Activated T-helper 2 cell treated with anti-CD3 and anti-CD28 coated beads, Interferon-gamma antibody, Interleukin-2, Interleukin-4, amounts not matched to agents 10 μg/mL and 5 μg/mL and 100 μg/mL, durations not matched to agents 14 hours and 24 hours and 36 hours (primary cell): ENCODE measurements at regions of chr16 and their contacts with region 1.

Region 1: DNA sequence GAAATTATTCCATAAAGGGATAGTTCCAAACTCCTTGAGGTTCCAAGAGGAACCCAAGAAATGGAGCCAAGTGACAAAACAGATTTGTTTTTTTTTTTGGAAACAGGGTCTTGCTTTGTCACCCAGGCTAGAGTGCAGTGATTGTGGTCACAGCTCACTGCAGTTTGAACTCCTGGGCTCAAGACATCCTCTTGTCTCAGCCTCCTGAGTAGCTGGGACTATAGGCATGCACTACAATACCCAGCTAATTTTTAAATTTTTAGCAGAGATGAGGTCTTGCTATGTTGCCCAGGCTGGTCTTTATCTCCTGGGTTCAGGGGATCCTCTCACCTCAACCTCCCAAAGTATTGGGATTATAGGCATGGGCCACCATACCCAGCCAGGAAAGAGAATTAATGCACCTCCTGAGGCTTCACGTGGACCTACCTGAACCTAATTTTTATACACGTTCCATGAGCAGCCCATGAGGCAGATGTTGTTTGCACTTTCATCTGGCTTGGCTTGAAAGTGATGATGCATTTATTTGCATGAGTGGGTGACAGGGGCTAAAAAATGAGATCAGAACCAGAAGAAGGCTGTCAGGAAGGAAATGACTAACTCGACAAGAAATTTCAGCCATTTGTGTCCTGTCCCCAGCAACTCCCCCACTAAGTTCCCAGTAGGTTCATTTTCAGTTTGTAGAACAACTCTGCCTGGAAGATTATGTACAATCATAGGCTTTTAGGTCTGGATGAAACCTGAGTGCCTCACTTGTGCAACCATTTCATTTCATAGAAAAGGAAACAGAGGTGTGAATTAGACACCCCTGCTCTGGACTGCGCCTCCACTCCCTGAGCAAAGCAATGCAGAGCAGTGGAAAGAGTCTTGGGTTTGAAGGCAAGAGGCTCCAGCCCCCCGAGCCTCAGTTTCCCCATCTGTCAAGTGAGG is 10.3 kb upstream of the IRF8 start:
- DNase-seq: no peak
- H3K4me3 Mint-ChIP-seq: no peak overlapping the region
- H3K27ac Mint-ChIP-seq: peak overlapping the region; percentile 48
- H3K4me1 Mint-ChIP-seq: peaks cover 36% of the 10 kb centered on the region
- H3K27me3 Mint-ChIP-seq: peaks cover 38% of the 10 kb centered on the region

Region 2: GRCh38 chr16:85898521-85899442 is 10.1 kb after region 1 on chr16 and contains the start of gene IRF8:
- intact Hi-C with region 1: loop called (anchors 1 kb)
- DNase-seq: peak; percentile 52
- H3K4me3 Mint-ChIP-seq: peak within 1 kb of the TSS; percentile 85
- H3K27ac Mint-ChIP-seq: peak within 1 kb of the TSS; percentile 56
- H3K4me1 Mint-ChIP-seq: peaks cover 48% of the 10 kb centered on the region
- H3K27me3 Mint-ChIP-seq: peaks cover 24% of the 10 kb centered on the region
- total RNA-seq, gene IRF8: 37.8 and 40.1 TPM in 2 replicates